ENCODE measurements at regions of chr3 and their contacts with region 1.

Region 1: DNA sequence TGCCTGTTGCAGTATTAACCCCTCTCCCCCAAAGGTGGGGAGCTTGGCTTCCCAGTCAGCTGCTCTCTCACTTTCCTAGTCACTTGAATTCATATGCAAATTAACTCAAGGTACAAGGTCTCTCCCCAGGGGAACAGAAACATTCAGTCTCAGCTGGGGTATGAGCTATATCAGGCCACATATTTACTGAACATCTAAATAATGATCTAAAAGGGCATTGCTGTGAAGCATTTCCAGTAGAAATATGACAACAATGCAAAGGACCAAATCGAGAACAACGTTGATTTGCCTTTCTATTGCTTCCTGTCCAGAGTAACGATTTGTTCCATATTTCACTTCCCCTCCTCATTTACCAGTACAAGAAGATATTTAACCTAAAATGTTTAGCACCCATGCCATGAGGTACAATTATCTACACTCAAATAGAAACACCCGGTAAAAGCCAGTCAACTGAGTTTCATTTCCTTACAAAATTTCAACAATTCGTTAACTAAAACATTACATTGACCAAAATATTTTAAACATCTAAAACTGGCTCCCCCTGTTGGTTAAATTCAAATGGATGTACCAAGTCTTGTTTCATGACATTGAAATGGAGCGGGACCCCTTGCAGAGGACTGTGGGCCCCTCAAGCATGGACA is 36.5 kb upstream of the KLHL6 start:
- DNase-seq: no peak
- ATAC-seq: peak; percentile 80
- H3K4me3 Mint-ChIP-seq: peak overlapping the region; percentile 59
- H3K27ac Mint-ChIP-seq: peak overlapping the region; percentile 83
- H3K4me1 Mint-ChIP-seq: peaks cover 47% of the 10 kb centered on the region
- H3K27me3 Mint-ChIP-seq: peaks cover 3% of the 10 kb centered on the region
- CTCF ChIP-seq: peak; percentile 42

Region 2: DNA sequence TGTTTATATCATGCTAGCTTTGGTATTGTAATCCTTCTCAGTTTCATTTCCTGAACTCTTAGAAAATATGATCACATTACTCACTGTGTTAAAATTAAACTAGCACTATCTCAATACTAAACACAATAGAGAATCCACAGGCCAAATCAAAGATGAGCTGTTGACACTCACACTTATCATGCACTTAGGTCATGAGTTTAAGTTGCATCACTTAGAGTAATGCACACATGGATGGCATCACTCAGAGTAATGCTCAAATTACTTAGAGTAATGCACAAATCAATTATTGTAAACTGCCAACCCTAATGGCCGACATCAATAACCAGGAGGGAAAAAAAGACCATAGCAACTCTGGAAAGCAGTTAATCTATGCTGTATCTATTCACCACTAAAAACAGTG is 123.6 kb before region 1 on chr3:
- CTCF ChIA-PET with region 1: interaction called, 4 read pairs
- POLR2A ChIA-PET with region 1: no interaction called
- intact Hi-C with region 1: loop called (anchors 1 kb)
- DNase-seq: no peak
- ATAC-seq: no peak
- H3K4me3 Mint-ChIP-seq: no peak overlapping the region
- H3K27ac Mint-ChIP-seq: no peak overlapping the region
- H3K4me1 Mint-ChIP-seq: peaks cover 10% of the 10 kb centered on the region
- H3K27me3 Mint-ChIP-seq: peaks cover 2% of the 10 kb centered on the region
- CTCF ChIP-seq: no peak

Region 3: GRCh38 chr3:183527428-183528379 is 64.3 kb before region 1 on chr3:
- CTCF ChIA-PET with region 1: no interaction called
- POLR2A ChIA-PET with region 1: interaction called, 3 read pairs
- intact Hi-C with region 1: loop called (anchors 5 kb)
- DNase-seq: no peak
- ATAC-seq: peak; percentile 83
- H3K4me3 Mint-ChIP-seq: peak overlapping the region; percentile 73
- H3K27ac Mint-ChIP-seq: peak overlapping the region; percentile 87
- H3K4me1 Mint-ChIP-seq: peaks cover 77% of the 10 kb centered on the region
- H3K27me3 Mint-ChIP-seq: no peaks in the 10 kb centered on the region
- CTCF ChIP-seq: no peak

Region 4: GRCh38 chr3:183576487-183577107 is 15.4 kb before region 1 on chr3:
- CTCF ChIA-PET with region 1: interaction called, 6 read pairs
- POLR2A ChIA-PET with region 1: interaction called, 5 read pairs
- intact Hi-C with region 1: loop called (anchors 1 kb)
- DNase-seq: no peak
- ATAC-seq: peak; percentile 47
- H3K4me3 Mint-ChIP-seq: peak overlapping the region; percentile 20
- H3K27ac Mint-ChIP-seq: no peak overlapping the region
- H3K4me1 Mint-ChIP-seq: peaks cover 54% of the 10 kb centered on the region
- H3K27me3 Mint-ChIP-seq: peaks cover 11% of the 10 kb centered on the region
- CTCF ChIP-seq: no peak

Region 5: DNA sequence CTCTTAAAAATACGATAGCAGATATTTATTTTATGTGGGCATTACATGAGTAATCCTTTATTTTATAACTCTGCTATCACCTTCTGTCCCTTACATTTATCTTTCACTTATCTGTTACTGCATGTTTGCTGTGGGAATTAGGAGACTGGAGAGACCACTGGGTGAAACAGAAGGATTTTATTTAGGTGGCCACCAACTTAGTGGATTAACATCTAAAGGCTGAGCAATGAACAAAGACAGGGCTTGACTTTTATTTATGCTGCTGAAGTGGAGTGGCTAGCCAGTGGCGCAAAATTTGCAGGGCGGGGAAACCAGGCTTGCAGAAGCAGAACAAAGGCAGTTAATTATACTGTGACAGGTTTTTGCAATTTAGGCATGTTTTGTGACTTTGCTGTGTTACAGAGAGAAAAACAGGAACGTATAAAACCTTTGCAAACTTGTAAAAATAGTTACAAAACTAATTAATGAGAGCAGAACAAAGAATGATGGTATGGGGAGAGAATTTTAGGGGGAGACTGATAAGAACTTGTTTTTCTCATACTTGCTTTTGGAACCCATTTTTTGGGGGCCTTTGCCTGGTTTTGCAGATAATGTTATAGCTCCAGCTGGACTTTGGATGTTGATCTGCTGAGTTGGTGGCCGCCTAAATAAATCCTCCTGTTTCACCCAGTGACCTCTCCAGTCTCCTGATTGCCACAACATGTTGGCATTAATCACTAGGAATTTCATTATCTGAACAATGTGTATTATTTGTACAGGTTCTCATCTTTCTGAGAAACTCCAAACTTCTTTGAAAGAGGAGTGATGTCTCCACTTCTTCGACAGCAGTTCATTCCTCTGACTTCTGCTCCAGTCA is 61.4 kb after region 1 on chr3:
- CTCF ChIA-PET with region 1: no interaction called
- POLR2A ChIA-PET with region 1: interaction called, 11 read pairs
- intact Hi-C with region 1: no loop called
- DNase-seq: no peak
- ATAC-seq: no peak
- H3K4me3 Mint-ChIP-seq: no peak overlapping the region
- H3K27ac Mint-ChIP-seq: no peak overlapping the region
- H3K4me1 Mint-ChIP-seq: no peaks in the 10 kb centered on the region
- H3K27me3 Mint-ChIP-seq: no peaks in the 10 kb centered on the region
- CTCF ChIP-seq: no peak

Region 6: GRCh38 chr3:183697610-183698317 is 105.8 kb after region 1 on chr3 and contains the start of gene YEATS2:
- CTCF ChIA-PET with region 1: no interaction called
- POLR2A ChIA-PET with region 1: interaction called, 5 read pairs
- intact Hi-C with region 1: loop called (anchors 5 kb)
- DNase-seq: peak; percentile 77
- ATAC-seq: peak; percentile 89
- H3K4me3 Mint-ChIP-seq: peak within 1 kb of the TSS; percentile 91
- H3K27ac Mint-ChIP-seq: peak within 1 kb of the TSS; percentile 86
- H3K4me1 Mint-ChIP-seq: peaks cover 32% of the 10 kb centered on the region
- H3K27me3 Mint-ChIP-seq: no peaks in the 10 kb centered on the region
- CTCF ChIP-seq: no peak
- total RNA-seq, gene YEATS2: 24.0 and 26.2 TPM in 2 replicates

Region 7: GRCh38 chr3:183766745-183767606 is 175.0 kb after region 1 on chr3:
- CTCF ChIA-PET with region 1: interaction called, 5 read pairs
- POLR2A ChIA-PET with region 1: no interaction called
- intact Hi-C with region 1: loop called (anchors 10 kb)
- DNase-seq: peak; percentile 32
- ATAC-seq: peak; percentile 86
- H3K4me3 Mint-ChIP-seq: no peak overlapping the region
- H3K27ac Mint-ChIP-seq: no peak overlapping the region
- H3K4me1 Mint-ChIP-seq: peaks cover 9% of the 10 kb centered on the region
- H3K27me3 Mint-ChIP-seq: no peaks in the 10 kb centered on the region
- CTCF ChIP-seq: no peak

Measured in activated B cell treated with CpG ODN at 0.5 μM for 24 hours (primary cell).